GM23248 (cell line): ENCODE measurements at regions of chr14 and their contacts with region 1.

Region 1: GRCh38 chr14:70622111-70622712 is 19.5 kb upstream of the TTC9 start:
- DNase-seq: peak; percentile 53
- H3K4me3 ChIP-seq: no peak overlapping the region
- H3K27ac ChIP-seq: no peak overlapping the region
- H3K4me1 ChIP-seq: no peaks in the 10 kb centered on the region
- H3K27me3 ChIP-seq: peaks cover 18% of the 10 kb centered on the region

Region 2: DNA sequence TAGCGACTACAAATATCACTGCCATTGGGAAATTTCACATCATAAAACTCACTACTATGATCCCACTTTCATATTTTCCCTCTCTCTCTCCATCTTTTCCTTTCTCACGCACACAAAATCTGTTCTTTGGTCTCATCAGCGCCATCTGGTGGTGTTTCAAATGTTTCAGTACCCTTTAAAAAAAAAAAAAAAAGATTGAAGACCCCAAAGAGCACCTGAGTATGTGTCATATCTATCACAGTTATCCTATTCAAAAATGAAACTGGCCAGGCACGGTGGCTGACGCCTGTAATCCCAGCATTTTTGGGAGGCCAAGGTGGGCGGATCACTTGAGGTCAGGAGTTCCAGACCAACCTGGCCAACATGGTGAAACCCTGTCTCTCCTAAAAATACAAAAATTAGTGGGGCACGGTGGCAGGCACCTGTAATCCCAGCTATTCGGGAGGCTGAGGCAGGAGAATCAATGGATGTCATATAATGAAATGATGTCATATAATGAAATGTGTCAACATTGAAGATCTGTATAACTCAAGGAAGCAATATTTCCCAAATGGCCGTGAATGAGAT is 91.9 kb after region 1 on chr14:
- in situ Hi-C with region 1: loop called (anchors 10 kb)
- DNase-seq: peak; percentile 69
- H3K4me3 ChIP-seq: no peak overlapping the region
- H3K27ac ChIP-seq: no peak overlapping the region
- H3K4me1 ChIP-seq: no peaks in the 10 kb centered on the region
- H3K27me3 ChIP-seq: peaks cover 40% of the 10 kb centered on the region

Region 3: GRCh38 chr14:70809543-70810244 is 187.5 kb after region 1 on chr14:
- in situ Hi-C with region 1: loop called (anchors 10 kb)
- DNase-seq: peak; percentile 39
- H3K4me3 ChIP-seq: peak overlapping the region; percentile 59
- H3K27ac ChIP-seq: no peak overlapping the region
- H3K4me1 ChIP-seq: no peaks in the 10 kb centered on the region
- H3K27me3 ChIP-seq: peaks cover 77% of the 10 kb centered on the region